PC-9 (cell line): ENCODE measurements at regions of chrX and their contacts with region 1.

Region 1: DNA sequence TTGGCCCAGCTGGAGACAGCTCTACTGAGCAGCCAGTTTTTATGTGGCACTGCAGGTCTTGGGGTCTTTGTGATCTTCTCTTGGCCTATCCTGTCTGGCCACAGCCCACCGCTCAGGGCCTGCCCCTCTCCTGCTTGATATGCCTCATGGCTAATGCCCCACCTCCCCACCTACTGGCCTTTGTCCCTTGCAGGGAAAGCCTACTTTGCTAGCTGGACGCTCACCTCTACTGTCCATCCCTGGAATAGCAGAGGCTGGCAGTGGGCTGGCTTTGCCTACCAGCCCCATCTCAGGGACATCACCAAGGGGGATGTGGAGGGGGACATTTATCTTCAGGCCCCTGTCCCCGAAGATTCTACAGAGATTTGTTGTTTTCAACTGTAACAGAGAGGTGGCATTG is 134.0 kb downstream of the PJA1 start:
- DNase-seq: no peak
- H3K4me3 ChIP-seq: no peak overlapping the region
- H3K27ac ChIP-seq: peak overlapping the region; percentile 79
- H3K4me1 ChIP-seq: peaks cover 34% of the 10 kb centered on the region
- H3K27me3 ChIP-seq: no peaks in the 10 kb centered on the region
- CTCF ChIP-seq: no peak

Region 2: DNA sequence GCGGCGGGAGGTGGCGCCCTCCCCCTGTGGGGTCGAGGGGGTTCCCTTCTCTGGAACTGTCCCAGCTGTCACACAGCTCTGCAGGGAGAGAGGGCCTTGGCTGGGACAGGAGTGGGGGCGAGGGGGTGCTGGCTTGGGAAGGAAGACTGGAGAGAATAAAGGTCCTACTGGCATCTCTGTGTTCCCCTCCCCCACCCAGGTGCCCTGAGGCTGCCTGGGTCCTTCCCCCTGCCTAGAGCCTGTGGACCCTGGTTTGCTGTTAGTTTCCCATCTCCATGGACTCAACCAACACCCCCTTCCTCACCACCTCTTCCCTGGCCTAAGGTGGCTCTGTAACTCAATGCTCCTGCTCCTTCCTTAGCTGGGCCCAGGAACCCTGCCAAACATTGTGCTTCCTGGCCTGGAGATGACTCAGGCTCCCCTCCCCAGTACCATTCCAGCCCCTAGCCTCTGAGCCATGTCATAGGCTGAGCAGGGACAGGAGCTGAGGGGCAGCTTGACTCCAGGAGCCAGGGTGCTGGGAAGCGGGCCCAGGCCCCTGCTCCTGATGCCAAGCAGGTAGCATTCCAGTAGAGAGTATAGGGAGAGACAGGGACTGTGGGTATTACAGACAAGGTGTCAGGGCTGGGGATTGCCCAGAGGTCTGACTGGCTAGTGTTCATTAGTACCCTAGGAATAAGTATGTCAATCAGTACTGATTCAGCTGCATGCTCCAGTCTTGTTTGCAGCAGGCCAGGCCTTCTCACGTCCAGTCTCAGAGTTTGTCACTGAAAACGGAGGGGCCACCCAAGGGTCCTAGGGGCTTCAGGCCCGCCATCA is 101.7 kb before region 1 on chrX:
- CTCF ChIA-PET with region 1: interaction called, 3 read pairs
- POLR2A ChIA-PET with region 1: interaction called, 4 read pairs
- intact Hi-C with region 1: loop called (anchors 2 kb)
- DNase-seq: peak; percentile 64 to 77
- H3K4me3 ChIP-seq: no peak overlapping the region
- H3K27ac ChIP-seq: no peak overlapping the region
- H3K4me1 ChIP-seq: peaks cover 26% of the 10 kb centered on the region
- H3K27me3 ChIP-seq: no peaks in the 10 kb centered on the region
- CTCF ChIP-seq: no peak

Region 3: DNA sequence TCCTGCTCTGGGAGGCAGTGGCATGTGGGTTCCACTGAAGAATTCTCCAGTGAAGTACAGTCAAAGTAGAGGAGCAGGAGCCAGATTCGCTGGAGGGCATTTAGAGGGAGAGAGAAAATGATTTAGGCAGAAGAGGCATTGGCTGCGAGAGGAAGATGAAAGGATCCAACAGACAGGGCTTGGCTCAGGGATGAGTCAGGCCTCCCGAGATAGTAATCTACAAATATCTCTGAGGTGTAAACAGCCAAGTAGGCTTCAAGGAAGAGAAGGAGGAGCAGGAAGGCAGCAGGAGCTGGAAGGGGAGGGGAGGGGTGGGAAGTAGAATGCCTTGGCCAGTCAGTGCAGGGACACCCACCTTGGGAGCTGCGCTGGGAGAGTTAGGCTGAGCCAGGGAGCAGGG is 78.5 kb after region 1 on chrX:
- CTCF ChIA-PET with region 1: no interaction called
- POLR2A ChIA-PET with region 1: no interaction called
- intact Hi-C with region 1: loop called (anchors 5 kb)
- DNase-seq: peak; percentile 73 to 93
- H3K4me3 ChIP-seq: no peak overlapping the region
- H3K27ac ChIP-seq: no peak overlapping the region
- H3K4me1 ChIP-seq: peaks cover 36% of the 10 kb centered on the region
- H3K27me3 ChIP-seq: no peaks in the 10 kb centered on the region
- CTCF ChIP-seq: no peak